Activated naive CD4-positive, alpha-beta T cell treated with anti-CD3 and anti-CD28 coated beads, Interleukin-2, amount 10 ng/mL, durations not matched to agents 7 days and 5 days (primary cell): ENCODE measurements at regions of chr14 and their contacts with region 1.

Region 1: GRCh38 chr14:81991998-81992397 is 458.3 kb upstream of the SEL1L start:
- DNase-seq: no peak
- H3K4me3 Mint-ChIP-seq: no peak overlapping the region
- H3K27ac Mint-ChIP-seq: no peak overlapping the region
- H3K4me1 Mint-ChIP-seq: peaks cover 3% of the 10 kb centered on the region
- H3K27me3 Mint-ChIP-seq: no peaks in the 10 kb centered on the region

Region 2: GRCh38 chr14:81565441-81566290 is 426.3 kb before region 1 on chr14:
- CTCF ChIA-PET with region 1: interaction called, 10 read pairs
- DNase-seq: peak; percentile 26
- H3K4me3 Mint-ChIP-seq: no peak overlapping the region
- H3K27ac Mint-ChIP-seq: no peak overlapping the region
- H3K4me1 Mint-ChIP-seq: no peaks in the 10 kb centered on the region
- H3K27me3 Mint-ChIP-seq: peaks cover 12% of the 10 kb centered on the region

Region 3: GRCh38 chr14:82029038-82029437 is 37.0 kb after region 1 on chr14:
- CTCF ChIA-PET with region 1: no interaction called
- DNase-seq: no peak
- H3K4me3 Mint-ChIP-seq: no peak overlapping the region
- H3K27ac Mint-ChIP-seq: no peak overlapping the region
- H3K4me1 Mint-ChIP-seq: no peaks in the 10 kb centered on the region
- H3K27me3 Mint-ChIP-seq: no peaks in the 10 kb centered on the region

Region 4: DNA sequence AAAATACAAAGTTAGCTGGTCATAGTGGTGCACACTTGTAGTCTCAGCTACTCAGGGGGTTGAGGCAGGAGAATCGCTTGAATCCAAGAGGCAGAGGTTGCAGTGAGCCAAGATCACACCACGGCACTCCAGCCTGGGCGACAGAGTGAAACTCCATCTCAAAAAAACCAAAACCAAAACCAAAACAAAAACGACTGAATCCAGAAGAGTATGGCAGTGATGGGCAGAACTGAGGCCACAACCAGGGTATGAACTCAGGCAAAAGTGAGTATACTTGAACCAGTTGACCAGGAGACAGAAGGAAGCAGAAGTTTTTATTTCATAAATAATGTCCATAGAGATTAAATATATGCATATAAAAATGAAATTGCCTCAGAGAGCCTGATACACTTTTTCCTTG is 161.7 kb after region 1 on chr14:
- CTCF ChIA-PET with region 1: no interaction called
- DNase-seq: no peak
- H3K4me3 Mint-ChIP-seq: no peak overlapping the region
- H3K27ac Mint-ChIP-seq: no peak overlapping the region
- H3K4me1 Mint-ChIP-seq: no peaks in the 10 kb centered on the region
- H3K27me3 Mint-ChIP-seq: no peaks in the 10 kb centered on the region